ENCODE measurements at regions of chr2 and their contacts with region 1.

Region 1: GRCh38 chr2:120699292-120699691 is 36.4 kb upstream of the GLI2 start:
- DNase-seq: no peak
- H3K4me3 ChIP-seq: no peak overlapping the region
- H3K27ac ChIP-seq: no peak overlapping the region
- H3K4me1 ChIP-seq: peaks cover 0 to 10% (median 5%) of the 10 kb centered on the region in 4 donors
- H3K27me3 ChIP-seq: peaks cover 0 to 5% (median 0%) of the 10 kb centered on the region in 3 donors
- CTCF ChIP-seq: no peak
- EP300 ChIP-seq: no peak
- POLR2A ChIP-seq: no peak

Region 2: DNA sequence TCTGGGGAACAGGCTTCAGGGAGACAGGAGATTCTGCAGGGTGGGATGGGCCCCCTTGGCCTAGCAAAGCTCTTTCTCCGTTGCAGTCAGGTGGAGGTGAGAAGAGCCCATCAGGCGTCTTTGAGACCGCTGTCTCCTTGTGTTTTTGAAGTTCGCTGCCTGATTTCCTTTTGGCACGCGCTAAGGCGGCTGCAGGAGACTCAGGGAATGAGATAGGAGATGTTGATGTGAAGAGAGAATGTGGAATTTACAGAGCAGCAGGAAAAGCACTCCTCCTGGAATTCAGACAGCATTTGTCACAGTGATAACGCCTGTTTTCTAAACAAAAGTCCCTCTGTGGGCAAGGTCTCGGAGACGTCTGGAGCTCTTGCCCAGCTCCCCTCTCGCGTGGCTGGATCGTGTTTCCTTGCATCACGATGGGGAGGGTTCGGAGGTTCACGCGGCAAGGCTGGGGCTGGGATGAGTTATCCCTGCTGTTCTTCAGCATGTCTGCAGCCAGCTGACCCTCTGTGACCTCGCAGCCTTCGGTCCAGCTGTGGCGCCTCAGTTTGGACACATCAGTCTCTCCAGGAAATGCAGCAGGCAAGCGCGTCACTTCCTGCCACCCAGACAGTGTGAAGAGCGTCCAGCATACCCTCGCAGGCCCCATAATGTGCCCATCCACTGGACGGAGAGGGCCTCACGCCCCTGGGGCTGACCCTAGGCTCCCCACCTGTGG is 66.5 kb after region 1 on chr2:
- intact Hi-C with region 1: loop called (anchors 2 kb)
- DNase-seq: peak; percentile 95
- H3K4me3 ChIP-seq: no peak overlapping the region
- H3K27ac ChIP-seq: peak overlapping the region; percentile 61 to 73 (median 70)
- H3K4me1 ChIP-seq: peaks cover 0 to 35% (median 24%) of the 10 kb centered on the region in 4 donors
- H3K27me3 ChIP-seq: no peaks in the 10 kb centered on the region
- CTCF ChIP-seq: no peak
- EP300 ChIP-seq: no peak
- POLR2A ChIP-seq: no peak